CD4-positive, alpha-beta memory T cell (primary cell): ENCODE measurements at regions of chr10 and their contacts with region 1.

Region 1: DNA sequence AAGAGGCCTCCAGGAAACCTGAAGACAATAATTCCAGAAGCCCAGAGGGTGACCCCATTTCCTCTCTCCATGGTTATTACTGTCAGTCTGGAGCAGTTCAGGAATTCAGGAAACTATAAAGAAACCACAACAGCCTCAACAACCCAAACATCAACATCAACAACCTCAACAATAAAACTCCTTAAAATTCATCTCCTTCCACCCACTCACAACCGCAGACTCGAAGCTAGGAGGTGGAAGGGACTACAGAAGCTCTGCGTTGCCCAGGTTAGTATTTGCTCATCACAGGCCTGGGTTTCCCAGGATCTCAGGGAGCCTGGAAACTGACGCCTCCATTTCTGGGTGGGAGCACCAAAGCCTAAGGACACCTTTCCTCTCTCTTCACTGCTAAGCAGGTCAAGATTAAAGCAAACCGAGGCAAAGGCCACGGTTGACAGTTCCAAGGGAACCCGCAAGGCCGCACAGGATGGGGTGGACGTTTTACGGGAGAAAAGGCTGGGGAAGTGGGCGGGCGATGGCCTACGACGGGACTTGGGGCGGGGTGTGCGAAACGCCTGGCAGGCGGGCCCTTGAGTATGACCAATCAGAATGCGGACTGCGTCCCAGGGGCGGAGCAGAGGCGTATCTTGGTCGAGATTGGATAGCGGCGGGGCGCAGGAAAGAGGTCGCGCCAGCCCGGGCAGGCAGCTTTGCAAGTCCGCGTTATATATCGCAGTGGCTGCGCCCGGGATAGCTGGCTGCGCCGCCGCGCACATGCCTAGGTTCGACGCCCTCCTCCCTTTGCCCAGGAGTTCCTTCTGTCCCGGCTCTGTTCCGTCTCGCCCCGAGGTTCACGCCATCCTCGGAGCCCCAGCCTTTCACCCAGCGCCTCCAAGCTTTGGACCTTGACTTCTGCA is at the start of gene ELOVL3:
- DNase-seq: peak; percentile 81 to 90 (median 84)
- H3K4me3 ChIP-seq: peak within 1 kb of the TSS in 1 of 2 donors; percentile 31
- H3K4me3 Mint-ChIP-seq: peak within 1 kb of the TSS; percentile 67 to 86 (median 80)
- H3K27ac ChIP-seq: peak within 1 kb of the TSS; percentile 7
- H3K27ac Mint-ChIP-seq: peak within 1 kb of the TSS; percentile 31 to 89 (median 52)
- H3K4me1 ChIP-seq: peaks cover 18% of the 10 kb centered on the region
- H3K4me1 Mint-ChIP-seq: peaks cover 6 to 26% (median 15%) of the 10 kb centered on the region in 4 donors
- H3K27me3 ChIP-seq: peaks cover 9% of the 10 kb centered on the region
- H3K27me3 Mint-ChIP-seq: peaks cover 22 to 27% of the 10 kb centered on the region in 2 donors
- total RNA-seq, gene ELOVL3: not detected

Region 2: GRCh38 chr10:102096449-102096848 is 129.4 kb before region 1 on chr10:
- CTCF ChIA-PET with region 1: no interaction called
- POLR2A ChIA-PET with region 1: no interaction called
- intact Hi-C with region 1: no loop called
- DNase-seq: no peak
- H3K4me3 ChIP-seq: no peak overlapping the region
- H3K4me3 Mint-ChIP-seq: no peak overlapping the region
- H3K27ac ChIP-seq: no peak overlapping the region
- H3K27ac Mint-ChIP-seq: no peak overlapping the region
- H3K4me1 ChIP-seq: no peaks in the 10 kb centered on the region
- H3K4me1 Mint-ChIP-seq: peaks cover 0 to 2% (median 0%) of the 10 kb centered on the region in 4 donors
- H3K27me3 ChIP-seq: no peaks in the 10 kb centered on the region
- H3K27me3 Mint-ChIP-seq: no peaks in the 10 kb centered on the region

Region 3: DNA sequence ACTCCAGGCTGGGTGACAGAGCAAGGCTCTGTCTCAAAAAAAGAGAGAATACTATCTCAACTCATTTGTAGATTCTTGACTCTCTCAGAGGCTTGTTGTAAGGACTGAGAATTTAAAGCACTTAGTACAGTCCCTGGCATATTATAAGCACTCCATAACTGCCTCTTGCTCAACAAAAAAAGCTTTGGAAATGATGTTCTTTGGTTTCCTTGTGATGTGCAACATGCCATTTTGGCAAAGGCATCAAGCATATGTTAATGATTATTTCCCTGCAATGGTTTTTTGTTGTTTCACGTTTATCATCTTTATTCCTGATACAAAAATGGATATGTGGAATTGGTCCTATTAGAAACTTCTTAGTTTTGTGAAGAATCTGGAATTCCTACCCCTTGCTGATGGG is 58.0 kb before region 1 on chr10:
- CTCF ChIA-PET with region 1: interaction called, 18 read pairs
- POLR2A ChIA-PET with region 1: no interaction called
- intact Hi-C with region 1: loop called (anchors 1 kb)
- DNase-seq: no peak
- H3K4me3 ChIP-seq: no peak overlapping the region
- H3K4me3 Mint-ChIP-seq: no peak overlapping the region
- H3K27ac ChIP-seq: no peak overlapping the region
- H3K27ac Mint-ChIP-seq: peak overlapping the region in 1 of 7 donors; percentile 36
- H3K4me1 ChIP-seq: peaks cover 4% of the 10 kb centered on the region
- H3K4me1 Mint-ChIP-seq: peaks cover 4 to 11% (median 6%) of the 10 kb centered on the region in 4 donors
- H3K27me3 ChIP-seq: no peaks in the 10 kb centered on the region
- H3K27me3 Mint-ChIP-seq: no peaks in the 10 kb centered on the region

Region 4: GRCh38 chr10:102268375-102268888 is 42.5 kb after region 1 on chr10:
- CTCF ChIA-PET with region 1: interaction called, 29 read pairs
- POLR2A ChIA-PET with region 1: no interaction called
- intact Hi-C with region 1: no loop called
- DNase-seq: no peak
- H3K4me3 ChIP-seq: no peak overlapping the region
- H3K4me3 Mint-ChIP-seq: no peak overlapping the region
- H3K27ac ChIP-seq: no peak overlapping the region
- H3K27ac Mint-ChIP-seq: peak overlapping the region in 4 of 7 donors; percentile 1 to 67 (median 58)
- H3K4me1 ChIP-seq: peaks cover 23% of the 10 kb centered on the region
- H3K4me1 Mint-ChIP-seq: peaks cover 38 to 69% (median 56%) of the 10 kb centered on the region in 4 donors
- H3K27me3 ChIP-seq: no peaks in the 10 kb centered on the region
- H3K27me3 Mint-ChIP-seq: no peaks in the 10 kb centered on the region

Region 5: DNA sequence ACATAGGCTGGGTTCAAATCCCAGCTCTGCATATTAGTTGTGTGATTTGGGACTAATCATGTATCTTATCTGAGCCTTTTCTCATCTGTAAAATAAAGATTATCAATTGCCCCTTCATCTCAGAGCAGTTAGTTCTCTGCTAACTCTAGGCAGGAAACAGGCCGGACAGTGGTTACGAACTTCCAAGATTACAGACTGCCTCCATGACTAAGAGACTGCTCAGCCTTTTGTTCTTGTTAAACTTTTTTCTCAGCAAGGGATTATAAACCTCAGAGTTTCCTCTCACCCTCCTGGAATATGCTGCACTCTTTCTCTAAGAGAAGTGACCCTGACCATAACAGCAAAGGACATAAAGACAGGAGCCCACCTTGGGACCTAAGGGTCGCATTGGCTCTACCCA is 117.1 kb after region 1 on chr10:
- CTCF ChIA-PET with region 1: interaction called, 549 read pairs
- POLR2A ChIA-PET with region 1: interaction called, 3 read pairs
- intact Hi-C with region 1: no loop called
- DNase-seq: no peak
- H3K4me3 ChIP-seq: no peak overlapping the region
- H3K4me3 Mint-ChIP-seq: no peak overlapping the region
- H3K27ac ChIP-seq: no peak overlapping the region
- H3K27ac Mint-ChIP-seq: peak overlapping the region in 3 of 7 donors; percentile 24 to 59 (median 53)
- H3K4me1 ChIP-seq: no peaks in the 10 kb centered on the region
- H3K4me1 Mint-ChIP-seq: peaks cover 0 to 1% (median 0%) of the 10 kb centered on the region in 4 donors
- H3K27me3 ChIP-seq: no peaks in the 10 kb centered on the region
- H3K27me3 Mint-ChIP-seq: no peaks in the 10 kb centered on the region

Region 6: GRCh38 chr10:102394079-102394800 is 168.3 kb after region 1 on chr10:
- CTCF ChIA-PET with region 1: interaction called, 88 read pairs
- POLR2A ChIA-PET with region 1: interaction called, 23 read pairs
- intact Hi-C with region 1: loop called (anchors 1 kb)
- DNase-seq: peak; percentile 99 to 100 (median 99)
- H3K4me3 ChIP-seq: peak overlapping the region; percentile 97 to 98
- H3K4me3 Mint-ChIP-seq: peak overlapping the region; percentile 94 to 98 (median 96)
- H3K27ac ChIP-seq: peak overlapping the region; percentile 100
- H3K27ac Mint-ChIP-seq: peak overlapping the region; percentile 98 to 100 (median 100)
- H3K4me1 ChIP-seq: peaks cover 43% of the 10 kb centered on the region
- H3K4me1 Mint-ChIP-seq: peaks cover 18 to 62% (median 34%) of the 10 kb centered on the region in 4 donors
- H3K27me3 ChIP-seq: no peaks in the 10 kb centered on the region
- H3K27me3 Mint-ChIP-seq: no peaks in the 10 kb centered on the region

Region 7: DNA sequence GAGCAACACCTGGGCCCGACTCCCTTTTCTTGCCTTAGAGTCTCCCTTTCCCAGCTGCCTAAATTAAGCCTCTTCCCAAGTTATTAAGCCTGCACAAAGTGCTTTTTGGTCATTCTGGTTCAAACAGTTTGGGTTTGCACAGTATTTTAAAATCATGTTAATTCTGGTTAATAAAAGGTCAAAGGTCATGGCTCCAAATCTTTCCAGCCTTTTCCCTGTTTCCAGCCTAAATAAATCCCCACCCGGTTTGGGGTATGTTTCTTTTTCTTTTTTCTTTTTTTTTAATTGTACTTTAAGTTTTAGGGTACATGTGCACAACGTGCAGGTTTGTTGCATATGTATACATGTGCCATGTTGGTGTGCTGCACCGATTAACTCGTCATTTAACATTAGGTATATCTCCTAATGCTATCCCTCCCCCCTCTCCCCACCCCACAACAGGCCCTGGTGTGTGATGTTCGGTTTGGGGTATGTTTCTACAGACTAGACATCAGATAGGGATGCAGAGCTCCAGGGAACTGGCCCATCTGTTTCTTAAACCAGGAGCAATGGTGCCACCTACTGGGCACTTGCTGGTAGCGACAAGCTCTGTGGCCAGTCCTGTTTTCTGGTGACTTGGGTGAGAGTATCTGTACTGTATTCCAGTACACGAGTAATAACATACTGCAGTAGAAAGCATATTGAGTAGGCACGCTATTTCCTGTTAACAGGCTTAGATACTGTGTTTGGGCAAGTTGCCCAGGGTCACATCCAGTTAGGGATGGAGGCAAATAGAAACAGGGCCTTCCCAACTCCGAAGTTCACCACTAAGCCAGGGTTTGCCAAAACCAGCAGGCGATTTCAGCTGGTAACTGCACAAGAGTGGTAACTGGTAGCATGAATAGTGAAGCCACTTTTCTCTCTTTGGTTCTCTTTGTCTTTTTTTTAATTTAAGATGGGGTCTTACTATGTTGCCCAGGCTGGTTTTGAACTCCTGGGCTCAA is 357.8 kb after region 1 on chr10:
- CTCF ChIA-PET with region 1: interaction called, 47 read pairs
- POLR2A ChIA-PET with region 1: interaction called, 3 read pairs
- intact Hi-C with region 1: loop called (anchors 1 kb)
- DNase-seq: peak; percentile 74 to 83 (median 76)
- H3K4me3 ChIP-seq: no peak overlapping the region
- H3K4me3 Mint-ChIP-seq: no peak overlapping the region
- H3K27ac ChIP-seq: no peak overlapping the region
- H3K27ac Mint-ChIP-seq: peak overlapping the region in 5 of 7 donors; percentile 7 to 84 (median 60)
- H3K4me1 ChIP-seq: peaks cover 8% of the 10 kb centered on the region
- H3K4me1 Mint-ChIP-seq: peaks cover 13 to 20% (median 15%) of the 10 kb centered on the region in 4 donors
- H3K27me3 ChIP-seq: no peaks in the 10 kb centered on the region
- H3K27me3 Mint-ChIP-seq: no peaks in the 10 kb centered on the region